Breast epithelium (tissue), 4 donors: ENCODE measurements at regions of chr14 and their contacts with region 1.

Region 1: DNA sequence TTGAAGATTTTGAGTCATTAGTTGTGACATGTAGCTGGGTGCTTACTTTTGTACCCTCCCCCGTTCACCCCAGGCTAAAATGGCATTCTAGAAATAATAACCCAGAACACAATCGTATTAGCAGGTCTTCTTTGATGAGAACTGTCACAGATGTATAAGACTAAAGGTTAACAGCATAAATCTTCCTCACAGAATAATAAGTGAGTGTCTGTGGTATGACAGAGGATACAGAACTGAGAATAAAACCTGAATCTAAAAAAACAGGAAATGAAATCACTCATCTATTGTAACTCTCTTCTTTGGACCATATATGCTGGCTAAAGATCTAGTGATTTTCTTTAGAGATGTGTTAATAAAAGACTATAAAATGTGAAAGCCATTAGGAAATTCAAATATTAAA is 746.6 kb downstream of the LRFN5 start:
- DNase-seq: no peak
- H3K4me3 ChIP-seq: no peak overlapping the region
- H3K27ac ChIP-seq: no peak overlapping the region
- H3K4me1 ChIP-seq: no peaks in the 10 kb centered on the region
- H3K27me3 ChIP-seq: no peaks in the 10 kb centered on the region
- CTCF ChIP-seq: no peak
- POLR2A ChIP-seq: no peak

Region 2: GRCh38 chr14:42523666-42524065 is 170.4 kb after region 1 on chr14:
- intact Hi-C with region 1: loop called (anchors 5 kb)
- DNase-seq: no peak
- H3K4me3 ChIP-seq: no peak overlapping the region
- H3K27ac ChIP-seq: no peak overlapping the region
- H3K4me1 ChIP-seq: no peaks in the 10 kb centered on the region
- H3K27me3 ChIP-seq: no peaks in the 10 kb centered on the region
- CTCF ChIP-seq: no peak
- POLR2A ChIP-seq: no peak